IMR-90 (cell line): ENCODE measurements at regions of chr13 and their contacts with region 1.

Region 1: DNA sequence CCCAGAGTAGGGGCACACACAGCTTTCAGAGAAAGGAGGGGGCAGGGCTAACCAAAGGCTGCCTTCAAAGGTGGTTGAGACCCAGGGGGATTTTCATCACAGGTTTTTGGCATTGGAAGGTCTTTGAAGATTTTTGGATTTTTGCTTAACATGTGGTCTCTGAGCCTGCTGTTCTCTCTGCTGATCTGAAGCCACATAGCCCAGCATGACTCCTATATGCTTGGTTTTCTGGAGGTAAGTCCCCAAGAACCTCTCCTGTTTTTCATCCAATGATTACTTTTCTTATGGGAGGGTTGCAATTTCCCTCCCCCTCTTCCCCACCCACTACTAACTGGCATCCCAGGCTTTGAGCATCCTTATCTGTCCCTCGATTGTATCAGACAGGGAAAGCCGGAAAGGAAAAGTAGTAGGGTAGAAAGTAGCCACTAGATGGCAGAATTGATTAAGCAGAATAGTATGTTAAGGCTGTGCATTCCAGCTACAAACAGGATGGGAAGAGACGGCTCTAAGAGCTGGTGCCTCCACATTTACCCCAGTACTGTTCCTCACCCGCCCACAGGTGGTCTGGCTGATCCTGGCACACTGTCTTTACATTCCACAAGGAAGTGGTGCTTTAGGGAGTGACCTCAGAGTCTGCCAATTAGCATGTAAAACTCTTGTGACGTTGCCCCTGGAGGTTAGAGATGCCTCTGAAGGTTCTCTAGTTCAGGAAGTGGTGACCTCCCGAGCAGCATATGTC is 218.9 kb upstream of the EDNRB start:
- DNase-seq: peak; percentile 72
- ATAC-seq: peak; percentile 99
- H3K4me3 ChIP-seq: no peak overlapping the region
- H3K27ac ChIP-seq: no peak overlapping the region
- H3K4me1 ChIP-seq: peaks cover 2% of the 10 kb centered on the region; the same call in 1 of the 2 replicates
- H3K27me3 ChIP-seq: peaks cover 4% of the 10 kb centered on the region; the same call in 1 of the 2 replicates
- CTCF ChIP-seq: peak; percentile 78
- POLR2A ChIP-seq: no peak
- RAD21 ChIP-seq: peak; percentile 89

Region 2: GRCh38 chr13:78022164-78022877 is 115.3 kb before region 1 on chr13:
- CTCF ChIA-PET with region 1: no interaction called
- POLR2A ChIA-PET with region 1: no interaction called
- dilution Hi-C with region 1: no loop called
- in situ Hi-C with region 1: no loop called
- intact Hi-C with region 1: no loop called
- DNase-seq: peak; percentile 72
- ATAC-seq: peak; percentile 71
- H3K4me3 ChIP-seq: no peak overlapping the region
- H3K27ac ChIP-seq: no peak overlapping the region
- H3K4me1 ChIP-seq: no peaks in the 10 kb centered on the region
- H3K27me3 ChIP-seq: no peaks in the 10 kb centered on the region
- CTCF ChIP-seq: no peak
- POLR2A ChIP-seq: no peak
- RAD21 ChIP-seq: no peak

Region 3: GRCh38 chr13:78147905-78148304 is 10.3 kb after region 1 on chr13:
- CTCF ChIA-PET with region 1: interaction called, 12 read pairs
- POLR2A ChIA-PET with region 1: no interaction called
- dilution Hi-C with region 1: no loop called
- in situ Hi-C with region 1: no loop called
- intact Hi-C with region 1: no loop called
- DNase-seq: peak; percentile 84
- ATAC-seq: peak; percentile 71
- H3K4me3 ChIP-seq: no peak overlapping the region
- H3K27ac ChIP-seq: no peak overlapping the region
- H3K4me1 ChIP-seq: no peaks in the 10 kb centered on the region
- H3K27me3 ChIP-seq: no peaks in the 10 kb centered on the region
- CTCF ChIP-seq: no peak
- POLR2A ChIP-seq: no peak
- RAD21 ChIP-seq: no peak

Region 4: GRCh38 chr13:78589206-78589605 is 451.6 kb after region 1 on chr13:
- CTCF ChIA-PET with region 1: no interaction called
- POLR2A ChIA-PET with region 1: no interaction called
- dilution Hi-C with region 1: no loop called
- in situ Hi-C with region 1: loop called (anchors 25 kb)
- intact Hi-C with region 1: loop called (anchors 10 kb)
- DNase-seq: peak; percentile 9
- ATAC-seq: 0 out of 2 replicates have a peak, but pooled peaks have one; percentile 54
- H3K4me3 ChIP-seq: no peak overlapping the region
- H3K27ac ChIP-seq: no peak overlapping the region
- H3K4me1 ChIP-seq: no peaks in the 10 kb centered on the region
- H3K27me3 ChIP-seq: peaks cover 46% of the 10 kb centered on the region
- CTCF ChIP-seq: no peak
- POLR2A ChIP-seq: no peak
- RAD21 ChIP-seq: no peak

Region 5: GRCh38 chr13:78595495-78596398 is 458.2 kb after region 1 on chr13:
- CTCF ChIA-PET with region 1: no interaction called
- POLR2A ChIA-PET with region 1: no interaction called
- dilution Hi-C with region 1: no loop called
- in situ Hi-C with region 1: loop called (anchors 25 kb)
- intact Hi-C with region 1: no loop called
- DNase-seq: no peak
- ATAC-seq: peak; percentile 62
- H3K4me3 ChIP-seq: peak overlapping the region; percentile 19; the same call in 1 of the 2 replicates
- H3K27ac ChIP-seq: no peak overlapping the region
- H3K4me1 ChIP-seq: no peaks in the 10 kb centered on the region
- H3K27me3 ChIP-seq: peaks cover 76% of the 10 kb centered on the region
- CTCF ChIP-seq: no peak
- POLR2A ChIP-seq: no peak
- RAD21 ChIP-seq: no peak

Region 6: GRCh38 chr13:78658635-78659449 is 521.3 kb after region 1 on chr13 and contains the start of gene OBI1:
- CTCF ChIA-PET with region 1: no interaction called
- POLR2A ChIA-PET with region 1: no interaction called
- dilution Hi-C with region 1: no loop called
- in situ Hi-C with region 1: no loop called
- intact Hi-C with region 1: loop called (anchors 10 kb)
- DNase-seq: peak; percentile 89
- ATAC-seq: peak; percentile 97
- H3K4me3 ChIP-seq: peak within 1 kb of the TSS; percentile 84
- H3K27ac ChIP-seq: peak within 1 kb of the TSS; percentile 75
- H3K4me1 ChIP-seq: peaks cover 5% of the 10 kb centered on the region
- H3K27me3 ChIP-seq: peaks cover 2% of the 10 kb centered on the region; the same call in 1 of the 2 replicates
- CTCF ChIP-seq: no peak
- POLR2A ChIP-seq: no peak
- RAD21 ChIP-seq: no peak
- total RNA-seq, gene OBI1: 11.8 and 19.7 TPM in 2 replicates

Region 7: DNA sequence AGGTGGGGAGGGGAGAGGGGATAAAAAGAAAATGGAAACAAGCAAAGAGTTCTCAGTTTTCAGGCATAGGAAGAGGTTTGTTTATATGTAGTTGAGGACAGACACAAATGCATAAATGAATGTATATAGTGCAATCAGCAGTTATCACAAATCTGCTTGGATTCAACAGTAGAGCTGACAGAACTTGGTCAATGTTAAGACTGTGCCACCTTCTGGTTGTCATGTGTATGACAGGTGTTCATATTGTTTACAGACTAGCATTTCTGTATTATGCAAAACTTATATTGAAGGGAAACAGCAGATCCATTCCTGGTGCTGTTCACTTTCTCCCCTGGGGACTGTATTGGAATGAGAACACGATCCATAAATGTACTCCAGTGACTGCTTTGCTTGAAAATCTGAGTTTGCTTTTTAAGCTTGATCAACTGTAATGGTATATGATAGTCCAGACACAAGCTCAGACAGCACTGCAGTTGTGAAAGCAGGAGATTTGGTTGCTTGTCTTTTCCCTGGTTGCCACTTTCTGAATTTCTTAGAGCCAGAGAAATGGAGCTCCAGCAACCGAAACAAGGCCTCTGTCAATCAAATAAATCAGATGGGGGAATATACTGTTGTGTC is 840.9 kb after region 1 on chr13:
- CTCF ChIA-PET with region 1: interaction called, 15 read pairs
- POLR2A ChIA-PET with region 1: no interaction called
- dilution Hi-C with region 1: no loop called
- in situ Hi-C with region 1: loop called (anchors 5 kb)
- intact Hi-C with region 1: loop called (anchors 1 kb)
- DNase-seq: peak; percentile 61
- ATAC-seq: peak; percentile 81
- H3K4me3 ChIP-seq: no peak overlapping the region
- H3K27ac ChIP-seq: no peak overlapping the region
- H3K4me1 ChIP-seq: no peaks in the 10 kb centered on the region
- H3K27me3 ChIP-seq: no peaks in the 10 kb centered on the region
- CTCF ChIP-seq: peak; percentile 64
- POLR2A ChIP-seq: no peak
- RAD21 ChIP-seq: peak; percentile 63

Region 8: DNA sequence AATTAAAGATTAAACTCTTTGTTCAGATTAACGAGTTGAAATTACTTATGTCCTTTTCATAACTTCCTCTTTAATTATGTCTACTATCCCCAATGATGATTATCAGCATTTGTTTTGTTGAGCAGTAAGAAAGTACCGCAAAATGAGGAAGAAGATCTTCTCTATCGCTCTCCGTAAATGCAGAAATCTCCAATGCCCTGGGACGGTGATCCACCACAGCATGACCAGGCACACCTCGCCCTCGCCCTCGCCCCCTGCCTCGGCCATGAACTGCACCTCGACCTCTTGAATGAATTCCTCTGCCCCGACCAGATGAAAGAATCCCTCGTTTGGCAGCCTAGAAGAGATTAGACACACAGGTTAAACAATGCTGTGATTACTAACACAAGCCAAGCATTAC is 1199.4 kb after region 1 on chr13:
- CTCF ChIA-PET with region 1: no interaction called
- POLR2A ChIA-PET with region 1: no interaction called
- dilution Hi-C with region 1: no loop called
- in situ Hi-C with region 1: no loop called
- intact Hi-C with region 1: loop called (anchors 10 kb)
- DNase-seq: no peak
- ATAC-seq: no peak
- H3K4me3 ChIP-seq: no peak overlapping the region
- H3K27ac ChIP-seq: no peak overlapping the region
- H3K4me1 ChIP-seq: no peaks in the 10 kb centered on the region
- H3K27me3 ChIP-seq: no peaks in the 10 kb centered on the region
- CTCF ChIP-seq: no peak
- POLR2A ChIP-seq: no peak
- RAD21 ChIP-seq: no peak